ENCODE measurements at regions of chr16 and their contacts with region 1.

Region 1: GRCh38 chr16:53904533-53904932 is 200.6 kb downstream of the FTO start:
- DNase-seq: no peak
- H3K4me3 ChIP-seq: no peak overlapping the region
- CTCF ChIP-seq: no peak
- POLR2A ChIP-seq: no peak

Region 2: DNA sequence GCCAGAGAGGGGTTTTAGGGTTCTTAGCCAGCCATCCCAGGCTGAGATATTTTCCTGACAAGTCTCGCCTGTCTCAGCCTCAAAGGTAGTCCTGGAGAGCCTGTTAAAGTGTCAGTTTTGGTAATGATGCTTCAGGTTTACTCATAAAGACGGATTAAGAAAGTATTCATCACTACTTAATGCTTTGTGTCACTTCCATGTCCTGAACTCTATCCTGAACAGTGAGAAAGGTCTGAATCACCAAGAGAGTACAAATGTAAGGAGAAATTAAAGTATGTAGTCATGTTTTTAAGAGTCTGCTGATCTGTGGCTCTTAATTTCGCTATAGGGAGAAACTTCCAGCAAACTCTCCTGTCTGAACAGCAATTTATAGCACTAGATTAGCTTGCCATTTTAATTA is 214.9 kb before region 1 on chr16:
- intact Hi-C with region 1: no loop called
- DNase-seq: no peak
- H3K4me3 ChIP-seq: no peak overlapping the region
- CTCF ChIP-seq: no peak
- POLR2A ChIP-seq: no peak

Region 3: DNA sequence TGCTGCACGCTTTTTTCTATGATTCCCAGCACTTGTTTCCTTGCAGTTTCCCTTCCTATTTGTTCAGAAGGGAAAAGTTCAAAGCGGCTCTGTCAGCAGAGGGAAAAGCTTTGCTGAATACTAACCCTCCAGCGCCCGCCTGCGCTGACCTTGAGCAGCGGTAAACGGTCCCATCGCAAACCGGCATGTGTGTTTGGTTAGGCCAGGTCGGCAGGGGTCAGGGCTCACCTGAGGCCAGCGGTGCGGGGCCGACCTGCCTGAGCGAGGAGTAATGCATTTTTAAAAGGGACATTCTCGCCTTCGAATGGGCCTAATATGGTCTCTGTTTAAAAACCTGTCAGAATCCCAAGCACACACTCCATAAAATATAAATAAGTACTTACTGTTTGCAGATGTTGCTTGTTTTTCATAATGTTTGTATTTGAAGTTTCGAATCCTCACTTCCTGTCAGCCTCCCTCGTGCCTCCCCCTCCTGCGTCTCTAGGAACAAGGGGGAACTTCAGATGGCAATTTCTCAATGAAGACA is 271.9 kb after region 1 on chr16:
- intact Hi-C with region 1: loop called (anchors 5 kb)
- DNase-seq: no peak
- H3K4me3 ChIP-seq: no peak overlapping the region
- CTCF ChIP-seq: no peak
- POLR2A ChIP-seq: no peak